Pancreas (tissue), 10 donors: ENCODE measurements at regions of chr12 and their contacts with region 1.

Region 1: GRCh38 chr12:52582971-52583456 is 9.4 kb upstream of the KRT74 start:
- DNase-seq: peak in 4 of 6 donors; percentile 28 to 74 (median 42)
- ATAC-seq: peak; percentile 76 to 97 (median 94)
- H3K4me3 ChIP-seq: no peak overlapping the region
- H3K27ac ChIP-seq: no peak overlapping the region
- H3K4me1 ChIP-seq: no peaks in the 10 kb centered on the region
- H3K27me3 ChIP-seq: no peaks in the 10 kb centered on the region
- CTCF ChIP-seq: peak; percentile 14 to 55 (median 48)

Region 2: GRCh38 chr12:52380271-52380694 is 202.7 kb before region 1 on chr12:
- intact Hi-C with region 1: loop called in 1 of 3 experiments (anchors 10 kb)
- DNase-seq: peak in 4 of 6 donors; percentile 27 to 67 (median 58)
- ATAC-seq: peak in 3 of 4 donors; percentile 24 to 73 (median 66)
- H3K4me3 ChIP-seq: no peak overlapping the region
- H3K27ac ChIP-seq: no peak overlapping the region
- H3K4me1 ChIP-seq: no peaks in the 10 kb centered on the region
- H3K27me3 ChIP-seq: no peaks in the 10 kb centered on the region
- CTCF ChIP-seq: peak in 2 of 4 donors; percentile 10 to 35

Region 3: GRCh38 chr12:52879394-52880351 is 296.7 kb after region 1 on chr12:
- intact Hi-C with region 1: loop called in 2 of 3 experiments (anchors 5 to 10 kb)
- DNase-seq: peak; percentile 76 to 91 (median 86)
- ATAC-seq: peak; percentile 83 to 92 (median 88)
- H3K4me3 ChIP-seq: peak overlapping the region in 2 of 4 donors; percentile 3 to 44
- H3K27ac ChIP-seq: peak overlapping the region in 3 of 4 donors; percentile 33 to 61 (median 54)
- H3K4me1 ChIP-seq: peaks cover 0 to 5% (median 0%) of the 10 kb centered on the region in 3 donors
- H3K27me3 ChIP-seq: no peaks in the 10 kb centered on the region
- CTCF ChIP-seq: peak; percentile 40 to 71 (median 55)